ENCODE measurements at regions of chr19 and their contacts with region 1.

Region 1: GRCh38 chr19:48588670-48589399 is 17.7 kb upstream of the SPACA4 start:
- DNase-seq: peak; percentile 92
- ATAC-seq: peak; percentile 94
- H3K4me3 Mint-ChIP-seq: peak overlapping the region; percentile 77
- H3K27ac Mint-ChIP-seq: peak overlapping the region; percentile 87
- H3K4me1 Mint-ChIP-seq: peaks cover 27% of the 10 kb centered on the region
- H3K27me3 Mint-ChIP-seq: no peaks in the 10 kb centered on the region

Region 2: DNA sequence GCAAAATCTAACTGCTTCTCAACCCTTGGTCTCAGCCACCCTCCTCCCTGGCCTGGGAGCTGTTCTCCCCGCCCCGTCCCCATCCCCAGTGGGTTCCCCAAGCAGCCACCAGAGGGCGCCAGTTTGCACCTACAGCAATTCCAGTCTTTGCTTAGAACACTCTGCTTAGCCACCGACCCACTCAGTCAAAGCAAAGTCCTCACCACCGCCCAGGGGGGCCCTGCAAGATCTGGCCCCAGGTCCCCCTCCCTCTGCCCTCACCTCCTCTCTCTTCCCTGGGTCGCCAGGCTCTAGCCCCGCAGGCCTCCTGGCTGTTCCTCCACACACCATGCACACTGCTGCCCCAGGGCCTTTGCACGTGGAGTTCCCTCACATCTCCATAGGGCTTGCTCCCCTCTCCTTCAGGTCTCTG is 237.5 kb before region 1 on chr19:
- CTCF ChIA-PET with region 1: interaction called, 13 read pairs
- POLR2A ChIA-PET with region 1: no interaction called
- DNase-seq: peak; percentile 88
- ATAC-seq: peak; percentile 99
- H3K4me3 Mint-ChIP-seq: no peak overlapping the region
- H3K27ac Mint-ChIP-seq: no peak overlapping the region
- H3K4me1 Mint-ChIP-seq: peaks cover 6% of the 10 kb centered on the region
- H3K27me3 Mint-ChIP-seq: no peaks in the 10 kb centered on the region

Region 3: GRCh38 chr19:48513289-48514122 is 75.3 kb before region 1 on chr19:
- CTCF ChIA-PET with region 1: interaction called, 166 read pairs
- POLR2A ChIA-PET with region 1: no interaction called
- DNase-seq: peak; percentile 86
- ATAC-seq: peak; percentile 78
- H3K4me3 Mint-ChIP-seq: no peak overlapping the region
- H3K27ac Mint-ChIP-seq: no peak overlapping the region
- H3K4me1 Mint-ChIP-seq: peaks cover 18% of the 10 kb centered on the region
- H3K27me3 Mint-ChIP-seq: no peaks in the 10 kb centered on the region

Region 4: DNA sequence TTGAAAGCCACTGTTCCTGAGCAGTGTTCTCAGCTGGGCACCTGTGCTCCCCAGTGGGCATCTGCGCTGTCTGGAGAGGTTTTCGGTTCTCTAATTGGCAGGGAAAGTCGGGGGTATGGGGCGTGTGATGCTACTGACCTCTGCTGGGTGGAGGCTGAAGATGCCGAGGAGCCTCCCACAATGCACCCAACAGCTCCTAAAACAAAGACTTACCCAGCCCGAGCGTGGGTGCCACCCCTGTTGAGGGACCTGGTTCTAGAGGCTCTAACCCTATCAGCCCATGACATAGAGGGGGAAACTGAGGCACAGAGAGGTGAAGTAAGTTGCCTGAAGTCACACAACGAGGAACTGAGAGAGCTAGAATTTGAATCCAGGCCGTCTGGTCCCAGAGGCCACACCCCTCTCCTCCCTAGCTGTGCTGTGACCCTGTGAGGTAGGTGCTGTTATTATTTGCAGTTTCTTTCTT is 20.0 kb after region 1 on chr19:
- CTCF ChIA-PET with region 1: interaction called, 32 read pairs
- POLR2A ChIA-PET with region 1: interaction called, 3 read pairs
- DNase-seq: peak; percentile 71
- ATAC-seq: peak; percentile 79
- H3K4me3 Mint-ChIP-seq: no peak overlapping the region
- H3K27ac Mint-ChIP-seq: peak overlapping the region; percentile 46
- H3K4me1 Mint-ChIP-seq: peaks cover 4% of the 10 kb centered on the region
- H3K27me3 Mint-ChIP-seq: no peaks in the 10 kb centered on the region